Caco-2 (cell line): ENCODE measurements at regions of chr15 and their contacts with region 1.

Region 1: DNA sequence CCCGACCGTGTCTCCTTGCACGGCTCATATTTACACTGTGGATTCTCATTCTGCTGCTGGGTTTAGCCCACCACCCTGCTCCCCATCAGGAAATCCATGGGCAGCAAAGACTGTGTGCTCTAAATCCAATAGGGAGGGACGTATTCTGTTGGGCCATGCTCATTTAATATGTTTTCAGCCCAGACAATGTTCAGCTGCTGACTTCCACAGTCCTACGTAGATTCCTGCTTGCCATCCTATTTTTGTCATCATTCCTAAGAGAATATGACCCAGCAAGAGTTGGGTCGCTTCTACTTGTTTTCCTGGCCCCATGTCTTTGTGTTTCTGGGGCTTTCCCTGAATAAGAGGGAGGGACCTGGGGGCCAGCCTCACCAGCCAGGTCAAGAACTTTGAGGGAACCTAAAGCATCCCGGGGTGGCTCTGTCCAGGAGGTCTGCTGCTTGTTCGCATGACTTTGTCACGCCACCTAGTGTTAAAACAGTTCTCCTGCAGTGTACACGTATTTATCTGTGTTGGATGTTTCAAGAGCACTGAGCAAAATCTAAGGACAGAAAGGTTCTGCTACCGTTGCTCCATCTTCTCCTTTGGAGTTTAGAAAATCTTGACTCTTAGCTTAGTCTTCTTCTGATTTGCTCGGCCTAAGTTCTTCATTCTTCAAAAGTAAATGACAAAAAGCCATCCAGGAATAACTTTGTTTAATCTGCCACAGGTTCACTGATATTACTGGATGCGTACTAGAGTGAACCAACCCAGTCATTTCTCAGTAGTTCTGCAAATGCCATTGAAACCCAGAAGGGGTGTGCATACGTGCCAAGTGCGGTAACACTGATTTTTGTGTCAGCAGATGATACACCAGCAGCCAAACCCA is 79.8 kb upstream of the NR2E3 start:
- DNase-seq: peak; percentile 62 to 63
- H3K4me3 ChIP-seq: no peak overlapping the region
- H3K4me3 Mint-ChIP-seq: no peak overlapping the region
- H3K27ac Mint-ChIP-seq: no peak overlapping the region
- H3K4me1 ChIP-seq: peaks cover 16% of the 10 kb centered on the region
- H3K4me1 Mint-ChIP-seq: no peaks in the 10 kb centered on the region
- H3K27me3 ChIP-seq: no peaks in the 10 kb centered on the region
- H3K27me3 Mint-ChIP-seq: no peaks in the 10 kb centered on the region
- CTCF ChIP-seq: peak in 1 of 2 experiments; percentile 67

Region 2: DNA sequence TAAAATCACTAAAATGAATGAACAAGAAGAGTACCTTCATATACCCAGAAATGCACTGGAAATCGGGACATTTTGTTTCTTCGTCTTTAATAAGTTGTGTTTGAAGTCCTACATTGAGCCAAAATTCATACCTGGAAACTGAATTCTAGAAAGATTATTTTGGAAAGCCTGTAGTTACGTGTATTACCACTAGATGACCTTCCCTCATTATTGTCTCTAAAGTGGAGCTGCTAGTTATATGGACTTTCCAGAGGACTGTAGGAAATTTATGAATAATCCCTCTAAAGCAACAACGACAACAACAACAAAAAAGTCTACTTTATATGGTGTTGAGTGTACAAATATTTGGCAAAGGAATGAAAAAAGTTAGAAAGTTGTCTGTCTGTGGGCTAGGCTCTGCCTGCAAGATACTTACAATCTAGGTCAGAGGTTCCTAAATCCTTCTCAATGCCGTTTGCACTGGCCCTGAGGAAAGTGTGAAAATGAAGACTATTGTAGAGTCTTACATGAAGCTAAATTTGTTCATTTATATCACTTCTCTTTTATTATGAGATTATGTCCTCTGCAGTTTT is 155.0 kb before region 1 on chr15:
- CTCF ChIA-PET with region 1: interaction called, 4 read pairs
- POLR2A ChIA-PET with region 1: no interaction called
- intact Hi-C with region 1: loop called (anchors 1 kb)
- DNase-seq: no peak
- H3K4me3 ChIP-seq: no peak overlapping the region
- H3K4me3 Mint-ChIP-seq: no peak overlapping the region
- H3K27ac Mint-ChIP-seq: no peak overlapping the region
- H3K4me1 ChIP-seq: no peaks in the 10 kb centered on the region
- H3K4me1 Mint-ChIP-seq: no peaks in the 10 kb centered on the region
- H3K27me3 ChIP-seq: no peaks in the 10 kb centered on the region
- H3K27me3 Mint-ChIP-seq: no peaks in the 10 kb centered on the region
- CTCF ChIP-seq: peak; percentile 51 to 65